OCI-LY7 (cell line): ENCODE measurements at regions of chr14 and their contacts with region 1.

Region 1: DNA sequence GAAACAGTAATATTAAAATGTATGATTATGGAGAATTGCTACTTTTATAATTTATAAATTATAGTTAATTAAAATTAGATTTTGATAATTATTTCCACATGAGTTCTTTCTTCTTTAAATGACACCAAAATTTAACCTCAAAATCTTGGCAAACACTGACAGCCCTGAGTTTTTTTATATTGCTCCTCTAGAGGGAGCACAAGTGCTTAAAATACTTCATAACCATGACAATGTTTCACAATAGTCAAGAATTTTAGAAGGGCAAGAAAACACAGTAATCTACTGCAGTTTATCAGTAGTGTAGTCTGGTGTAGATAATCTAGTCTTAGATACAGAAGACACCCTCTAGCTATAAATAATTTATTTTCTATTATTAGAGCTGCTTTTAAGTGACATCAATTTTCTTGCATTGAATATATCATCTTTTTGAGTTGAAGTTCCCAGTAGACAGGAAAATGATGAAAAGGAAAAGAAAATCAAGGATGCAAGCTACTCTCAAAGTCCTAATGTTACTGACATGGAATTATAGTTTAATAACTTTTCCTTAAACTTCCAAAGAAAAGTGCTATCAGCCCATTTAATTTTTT is 14.3 kb upstream of the PTGER2 start:
- DNase-seq: peak; percentile 57
- H3K4me3 ChIP-seq: no peak overlapping the region
- H3K27ac ChIP-seq: no peak overlapping the region
- H3K4me1 ChIP-seq: no peaks in the 10 kb centered on the region
- CTCF ChIP-seq: peak; percentile 87

Region 2: GRCh38 chr14:52473557-52473956 is 173.8 kb after region 1 on chr14:
- CTCF ChIA-PET with region 1: no interaction called
- POLR2A ChIA-PET with region 1: no interaction called
- intact Hi-C with region 1: loop called (anchors 5 kb)
- DNase-seq: peak; percentile 14
- H3K4me3 ChIP-seq: no peak overlapping the region
- H3K27ac ChIP-seq: no peak overlapping the region
- H3K4me1 ChIP-seq: no peaks in the 10 kb centered on the region
- CTCF ChIP-seq: peak; percentile 75